Left ventricle myocardium inferior (tissue), 1 donor: ENCODE measurements at regions of chr6 and their contacts with region 1.

Region 1: DNA sequence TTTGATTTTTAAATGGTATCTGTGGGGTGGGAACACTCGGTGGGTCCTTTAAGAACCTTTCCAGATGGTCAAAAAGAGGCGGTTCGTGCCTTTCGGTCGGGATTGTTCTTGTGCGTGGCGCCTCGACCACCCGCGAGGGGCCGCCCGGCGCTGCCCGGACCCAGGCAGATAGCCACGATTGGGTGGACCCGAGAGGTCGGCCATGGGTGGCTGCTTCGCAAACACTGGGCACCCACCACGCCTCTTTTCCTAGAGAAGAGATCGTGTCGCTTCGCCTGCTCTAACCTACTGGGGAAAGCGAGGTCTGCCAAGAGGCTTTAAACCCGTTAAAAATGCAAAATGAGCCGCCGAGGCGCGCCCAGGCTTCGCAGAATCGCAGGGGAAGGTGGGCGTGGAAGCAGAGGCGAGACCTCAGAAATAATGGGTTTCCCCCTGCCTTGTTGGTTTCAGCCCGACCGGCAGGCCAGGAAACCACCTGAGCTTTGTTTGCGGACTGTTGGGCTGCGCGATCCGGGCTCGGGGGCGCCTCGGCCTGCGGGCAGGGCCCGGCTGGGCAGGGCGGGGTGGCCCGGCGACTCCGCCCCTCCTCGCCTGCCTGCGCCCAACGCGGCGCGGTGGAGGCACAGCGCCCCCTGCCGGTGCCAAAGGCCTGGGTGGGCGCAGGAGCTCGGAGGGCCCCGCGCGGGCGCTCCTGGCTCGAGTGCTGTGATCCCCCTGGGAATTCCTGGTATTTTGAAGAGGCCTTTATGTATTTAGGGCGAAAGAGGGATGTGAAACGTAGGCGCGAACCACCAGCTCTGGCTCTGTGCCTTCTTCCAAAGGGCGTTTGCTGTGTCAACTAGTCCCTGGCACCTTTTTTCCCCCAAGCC is 1.6 kb downstream of the MARCKS start:
- DNase-seq: peak; percentile 86
- H3K4me3 ChIP-seq: peak overlapping the region; percentile 89
- H3K27ac ChIP-seq: peak overlapping the region; percentile 94
- H3K4me1 ChIP-seq: peaks cover 77% of the 10 kb centered on the region
- H3K27me3 ChIP-seq: peaks cover 21% of the 10 kb centered on the region
- CTCF ChIP-seq: peak; percentile 98

Region 2: GRCh38 chr6:112780498-112781096 is 1078.1 kb before region 1 on chr6:
- intact Hi-C with region 1: loop called (anchors 5 kb)
- DNase-seq: peak; percentile 29
- H3K4me3 ChIP-seq: no peak overlapping the region
- H3K27ac ChIP-seq: no peak overlapping the region
- H3K4me1 ChIP-seq: no peaks in the 10 kb centered on the region
- H3K27me3 ChIP-seq: no peaks in the 10 kb centered on the region
- CTCF ChIP-seq: peak; percentile 87

Region 3: GRCh38 chr6:113564371-113565161 is 294.1 kb before region 1 on chr6:
- intact Hi-C with region 1: loop called (anchors 10 kb)
- DNase-seq: peak; percentile 86
- H3K4me3 ChIP-seq: peak overlapping the region; percentile 56
- H3K27ac ChIP-seq: peak overlapping the region; percentile 85
- H3K4me1 ChIP-seq: peaks cover 15% of the 10 kb centered on the region
- H3K27me3 ChIP-seq: peaks cover 7% of the 10 kb centered on the region
- CTCF ChIP-seq: peak; percentile 44

Region 4: DNA sequence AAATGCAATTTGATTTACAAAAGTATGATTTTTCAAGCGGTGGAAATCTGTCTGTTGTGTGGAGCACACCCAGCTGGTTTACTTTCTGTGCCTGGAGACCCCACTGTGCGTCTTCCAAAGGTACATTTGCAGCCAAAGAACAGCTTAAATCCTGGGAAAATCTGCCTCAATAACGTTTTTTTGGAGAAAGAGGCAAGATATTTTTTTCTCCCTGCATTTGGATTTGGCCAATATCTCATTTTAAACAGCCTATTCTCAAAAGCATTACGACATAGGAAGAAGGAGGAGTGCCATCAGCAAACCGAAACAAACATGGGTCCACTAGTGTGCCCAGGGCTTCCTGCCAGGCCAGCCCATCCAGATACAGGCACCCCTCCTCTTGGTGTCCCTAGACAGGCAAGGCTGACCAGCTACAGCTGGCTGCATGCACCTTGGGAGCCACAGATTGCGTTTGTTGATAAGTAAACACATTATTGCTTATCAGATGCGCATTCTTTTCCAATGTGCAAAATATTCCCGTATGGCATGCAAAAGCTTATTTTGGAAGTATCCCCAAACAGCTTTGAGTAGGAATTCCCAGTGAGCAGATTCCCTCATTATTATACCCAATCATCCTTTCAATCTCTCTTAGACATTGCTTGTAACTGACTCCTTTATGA is 186.1 kb before region 1 on chr6:
- intact Hi-C with region 1: loop called (anchors 10 kb)
- DNase-seq: peak; percentile 66
- H3K4me3 ChIP-seq: peak overlapping the region; percentile 32
- H3K27ac ChIP-seq: peak overlapping the region; percentile 70
- H3K4me1 ChIP-seq: peaks cover 41% of the 10 kb centered on the region
- H3K27me3 ChIP-seq: no peaks in the 10 kb centered on the region
- CTCF ChIP-seq: no peak

Region 5: DNA sequence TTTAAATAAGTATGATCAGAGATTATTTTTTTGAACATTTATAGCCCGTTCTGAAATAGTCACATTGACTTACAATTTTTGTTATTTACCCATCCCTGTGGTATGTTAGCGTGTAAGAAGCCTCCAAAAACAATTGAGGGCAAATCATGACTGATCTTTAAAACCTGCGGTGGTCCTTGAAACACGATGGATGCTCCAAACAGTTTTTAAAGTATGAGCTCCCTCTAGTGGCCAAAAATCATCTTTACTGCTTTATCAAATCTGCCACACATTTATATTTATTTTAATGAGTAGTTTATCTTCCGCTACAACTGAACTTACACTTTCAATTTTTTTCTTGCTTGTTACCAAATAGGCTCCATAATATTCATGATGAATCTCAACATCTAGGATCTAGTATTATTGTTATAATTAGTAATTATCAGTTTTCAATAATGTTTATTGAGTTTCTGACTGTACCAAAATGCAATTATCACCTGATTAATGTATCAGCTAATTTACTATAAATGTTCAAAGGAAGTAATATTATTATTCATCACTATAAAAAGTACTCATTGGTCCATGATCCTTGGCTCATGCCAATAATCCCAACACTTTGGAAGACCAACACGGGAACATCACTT is 50.6 kb after region 1 on chr6:
- intact Hi-C with region 1: loop called (anchors 10 kb)
- DNase-seq: no peak
- H3K4me3 ChIP-seq: no peak overlapping the region
- H3K27ac ChIP-seq: no peak overlapping the region
- H3K4me1 ChIP-seq: peaks cover 4% of the 10 kb centered on the region
- H3K27me3 ChIP-seq: no peaks in the 10 kb centered on the region
- CTCF ChIP-seq: peak; percentile 80